AG04449 (cell line): ENCODE measurements at regions of chr1 and their contacts with region 1.

Region 1: GRCh38 chr1:39659110-39659509 is 12.8 kb downstream of the NT5C1A start:
- DNase-seq: no peak
- H3K4me3 ChIP-seq: no peak overlapping the region
- CTCF ChIP-seq: no peak

Region 2: DNA sequence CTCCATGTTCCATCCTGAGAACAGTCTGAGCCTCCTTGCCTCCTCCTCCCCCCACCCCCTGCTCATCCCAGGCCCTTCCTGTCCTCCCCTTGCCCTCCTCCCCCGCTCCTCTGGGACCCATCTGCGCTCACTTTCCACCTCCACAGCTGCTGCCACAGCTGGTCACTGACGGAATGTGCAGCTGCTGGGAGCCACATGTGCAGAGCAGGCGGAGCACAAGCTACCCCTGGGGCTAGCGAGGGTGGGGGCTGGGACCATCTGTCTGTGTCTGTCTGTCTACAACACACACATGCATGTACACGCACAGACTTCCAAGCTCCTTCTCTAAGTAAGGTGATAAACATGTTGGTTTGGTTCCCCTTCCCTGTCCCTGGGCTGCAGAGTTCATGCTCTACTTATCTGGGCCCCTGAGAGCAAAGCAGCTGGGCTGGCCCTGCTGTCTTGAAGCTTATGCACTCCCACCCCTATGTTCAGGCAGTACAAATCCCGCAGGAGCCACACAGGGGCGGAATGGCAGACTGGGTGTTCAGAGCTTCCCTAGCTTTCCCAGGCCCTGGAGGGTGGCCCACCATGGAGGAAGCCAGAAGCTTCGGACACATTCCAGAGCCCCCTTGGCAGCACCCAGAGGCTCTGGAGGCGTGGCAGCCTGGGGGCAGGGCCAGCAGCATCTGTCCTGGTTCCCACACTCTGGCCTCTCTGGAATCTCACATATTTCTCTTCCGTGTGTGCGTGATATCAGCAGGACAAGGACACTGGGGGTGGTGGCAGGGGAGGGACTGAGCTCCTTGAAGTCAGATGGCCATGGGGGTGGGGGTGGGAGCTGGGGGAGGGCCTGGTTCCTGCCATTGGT is 12.7 kb before region 1 on chr1:
- CTCF ChIA-PET with region 1: interaction called, 62 read pairs
- POLR2A ChIA-PET with region 1: no interaction called
- DNase-seq: no peak
- H3K4me3 ChIP-seq: no peak overlapping the region
- CTCF ChIP-seq: no peak

Region 3: GRCh38 chr1:40143891-40144575 is 484.9 kb after region 1 on chr1:
- CTCF ChIA-PET with region 1: no interaction called
- POLR2A ChIA-PET with region 1: no interaction called
- DNase-seq: no peak
- H3K4me3 ChIP-seq: no peak overlapping the region
- CTCF ChIP-seq: peak; percentile 69